Right ventricle myocardium inferior (tissue), 1 donor: ENCODE measurements at regions of chr4 and their contacts with region 1.

Region 1: DNA sequence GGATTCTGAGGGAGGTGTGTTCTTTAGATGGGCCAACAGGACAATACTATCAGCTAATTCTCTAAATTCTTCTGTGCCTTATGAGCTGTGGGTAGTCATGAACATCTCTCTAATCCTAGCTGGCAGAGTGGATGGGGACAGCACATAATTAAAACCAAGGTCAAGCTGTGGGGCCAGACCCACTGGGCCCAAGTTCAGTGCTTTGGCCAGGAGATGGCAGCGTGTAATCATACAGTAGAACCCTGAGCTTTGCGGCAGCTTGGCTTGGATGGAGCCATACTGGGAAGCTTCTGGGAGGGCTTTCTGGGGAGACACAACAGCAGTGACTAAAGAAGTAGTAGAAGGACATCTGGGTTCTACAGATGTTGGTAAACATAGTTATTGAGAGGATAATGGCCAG is 140.3 kb upstream of the CXCL13 start:
- DNase-seq: no peak
- ATAC-seq: no peak

Region 2: GRCh38 chr4:77600521-77601451 is 135.5 kb after region 1 on chr4:
- intact Hi-C with region 1: loop called (anchors 2 kb)
- DNase-seq: no peak
- ATAC-seq: no peak